HCT116 (cell line): ENCODE measurements at regions of chr20 and their contacts with region 1.

Region 1: DNA sequence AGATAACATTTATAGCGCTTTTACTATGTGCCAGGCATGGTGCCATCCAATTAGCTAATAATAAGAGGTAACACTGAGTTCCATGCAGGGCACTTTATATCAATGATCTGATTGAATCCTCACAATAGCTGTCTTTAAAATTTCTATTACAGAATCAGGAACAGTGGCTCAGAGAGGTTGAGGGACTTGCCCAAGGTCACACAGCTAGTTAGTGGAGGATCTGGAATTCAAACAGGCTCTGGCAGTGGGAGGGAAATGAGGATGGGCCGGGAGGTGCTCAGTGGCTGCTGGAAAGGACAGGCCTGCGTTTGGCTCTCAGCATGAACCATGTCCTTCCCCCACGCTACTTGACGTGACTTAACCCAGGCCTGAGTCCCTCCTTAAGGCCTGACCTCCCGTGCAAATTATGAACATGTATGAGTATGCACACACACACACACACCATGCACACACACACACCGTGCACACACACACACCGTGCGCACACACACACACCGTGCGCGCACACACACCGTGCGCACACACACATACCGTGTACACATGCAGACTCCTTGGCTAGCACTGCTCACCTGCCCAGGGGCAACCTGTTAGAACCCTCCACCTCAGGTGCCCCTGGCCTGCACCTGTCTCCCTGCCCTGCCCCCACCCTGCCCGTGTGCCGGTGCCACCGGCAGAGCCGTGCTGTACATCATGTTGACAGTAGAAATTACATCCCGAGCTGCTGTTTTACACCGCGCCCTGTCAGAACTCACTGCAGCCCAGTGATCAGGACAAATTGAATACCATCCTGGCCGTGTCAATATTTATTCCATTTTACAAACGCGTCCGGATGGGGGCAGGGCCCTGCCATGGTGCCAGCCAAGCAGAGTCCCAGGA is 43.7 kb downstream of the CDH22 start:
- DNase-seq: no peak
- ATAC-seq: no peak
- H3K4me3 ChIP-seq: no peak overlapping the region
- H3K27ac ChIP-seq: no peak overlapping the region
- H3K4me1 ChIP-seq: no peaks in the 10 kb centered on the region
- H3K27me3 ChIP-seq: no peaks in the 10 kb centered on the region
- CTCF ChIP-seq: no peak
- POLR2A ChIP-seq: no peak
- RAD21 ChIP-seq: no peak

Region 2: DNA sequence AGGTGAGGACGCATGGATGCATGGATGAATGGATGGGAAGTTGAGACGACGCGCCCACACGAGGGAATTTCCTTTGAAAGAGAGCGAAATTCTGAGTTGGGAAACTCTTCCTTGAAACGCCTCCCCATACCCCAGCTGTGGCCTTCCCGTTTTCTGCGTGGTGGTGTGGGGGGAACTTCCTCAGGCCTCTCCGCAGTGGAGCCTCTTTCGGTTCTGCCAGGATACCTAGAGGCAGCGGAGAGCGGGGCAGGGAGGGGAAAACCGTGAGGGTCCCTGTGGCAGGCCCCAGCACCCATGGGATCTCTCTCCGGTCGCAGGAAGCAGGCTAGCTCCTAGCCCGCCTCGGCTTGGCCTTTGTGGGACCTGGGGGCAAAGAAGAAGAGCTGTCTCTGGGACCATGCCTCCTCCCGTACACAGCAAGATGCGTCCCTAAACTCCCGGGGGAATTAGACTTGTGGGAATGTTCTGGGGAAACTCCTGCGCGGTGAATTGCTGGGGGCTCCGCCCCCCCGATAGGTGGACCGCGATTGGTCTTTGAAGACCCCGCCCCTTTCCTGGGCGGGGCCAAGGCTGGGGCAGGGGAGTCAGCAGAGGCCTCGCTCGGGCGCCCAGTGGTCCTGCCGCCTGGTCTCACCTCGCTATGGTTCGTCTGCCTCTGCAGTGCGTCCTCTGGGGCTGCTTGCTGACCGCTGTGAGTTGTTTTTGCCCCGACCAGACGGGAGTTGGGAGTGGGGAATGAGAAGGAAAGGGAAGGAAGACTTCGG is 146.7 kb before region 1 on chr20 and contains the start of gene CD40:
- CTCF ChIA-PET with region 1: no interaction called
- POLR2A ChIA-PET with region 1: no interaction called
- RAD21 ChIA-PET with region 1: no interaction called
- intact Hi-C with region 1: no loop called
- DNase-seq: peak; percentile 68
- ATAC-seq: peak; percentile 98
- H3K4me3 ChIP-seq: peak within 1 kb of the TSS; percentile 71 to 74
- H3K27ac ChIP-seq: peak within 1 kb of the TSS; percentile 33
- H3K4me1 ChIP-seq: peaks cover 11 to 15% of the 10 kb centered on the region in 2 experiments
- H3K27me3 ChIP-seq: no peaks in the 10 kb centered on the region
- CTCF ChIP-seq: no peak
- POLR2A ChIP-seq: peak; percentile 38
- RAD21 ChIP-seq: no peak
- total RNA-seq, gene CD40: 21.3 TPM

Region 3: DNA sequence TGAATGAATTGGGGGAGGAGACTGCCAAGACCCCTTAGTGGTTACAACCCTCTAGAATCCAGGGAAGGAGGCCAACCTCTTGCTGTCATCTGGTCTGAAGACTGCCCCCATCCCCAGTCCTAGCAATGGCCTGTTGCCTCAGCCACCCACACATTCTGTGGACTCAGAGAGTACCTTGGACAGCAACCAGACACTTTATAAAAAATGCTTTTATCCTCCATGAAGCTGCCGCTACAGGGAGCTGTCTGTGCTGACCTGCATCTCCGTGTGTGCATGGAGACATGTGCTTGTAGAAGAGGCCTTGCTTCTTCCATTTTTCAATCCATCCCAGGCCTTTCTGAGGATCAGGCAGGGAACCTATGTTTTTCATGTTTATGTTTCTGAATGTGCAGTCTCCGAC is 28.5 kb after region 1 on chr20:
- CTCF ChIA-PET with region 1: no interaction called
- POLR2A ChIA-PET with region 1: no interaction called
- RAD21 ChIA-PET with region 1: no interaction called
- intact Hi-C with region 1: no loop called
- DNase-seq: no peak
- ATAC-seq: peak; percentile 30; the same call in 1 of the 2 replicates
- H3K4me3 ChIP-seq: no peak overlapping the region
- H3K27ac ChIP-seq: no peak overlapping the region
- H3K4me1 ChIP-seq: 0 out of 4 replicates have a peak, but pooled peaks cover 3 to 4% of the 10 kb centered on the region in 2 experiments
- H3K27me3 ChIP-seq: peaks cover 31% of the 10 kb centered on the region
- CTCF ChIP-seq: no peak
- POLR2A ChIP-seq: no peak
- RAD21 ChIP-seq: no peak

Region 4: GRCh38 chr20:46343348-46343974 is 78.8 kb after region 1 on chr20:
- CTCF ChIA-PET with region 1: no interaction called
- POLR2A ChIA-PET with region 1: no interaction called
- RAD21 ChIA-PET with region 1: no interaction called
- intact Hi-C with region 1: loop called (anchors 2 kb)
- DNase-seq: no peak
- ATAC-seq: no peak
- H3K4me3 ChIP-seq: no peak overlapping the region
- H3K27ac ChIP-seq: no peak overlapping the region
- H3K4me1 ChIP-seq: no peaks in the 10 kb centered on the region
- H3K27me3 ChIP-seq: peaks cover 27% of the 10 kb centered on the region; the same call in 1 of the 2 replicates
- CTCF ChIP-seq: no peak
- POLR2A ChIP-seq: no peak
- RAD21 ChIP-seq: no peak

Region 5: DNA sequence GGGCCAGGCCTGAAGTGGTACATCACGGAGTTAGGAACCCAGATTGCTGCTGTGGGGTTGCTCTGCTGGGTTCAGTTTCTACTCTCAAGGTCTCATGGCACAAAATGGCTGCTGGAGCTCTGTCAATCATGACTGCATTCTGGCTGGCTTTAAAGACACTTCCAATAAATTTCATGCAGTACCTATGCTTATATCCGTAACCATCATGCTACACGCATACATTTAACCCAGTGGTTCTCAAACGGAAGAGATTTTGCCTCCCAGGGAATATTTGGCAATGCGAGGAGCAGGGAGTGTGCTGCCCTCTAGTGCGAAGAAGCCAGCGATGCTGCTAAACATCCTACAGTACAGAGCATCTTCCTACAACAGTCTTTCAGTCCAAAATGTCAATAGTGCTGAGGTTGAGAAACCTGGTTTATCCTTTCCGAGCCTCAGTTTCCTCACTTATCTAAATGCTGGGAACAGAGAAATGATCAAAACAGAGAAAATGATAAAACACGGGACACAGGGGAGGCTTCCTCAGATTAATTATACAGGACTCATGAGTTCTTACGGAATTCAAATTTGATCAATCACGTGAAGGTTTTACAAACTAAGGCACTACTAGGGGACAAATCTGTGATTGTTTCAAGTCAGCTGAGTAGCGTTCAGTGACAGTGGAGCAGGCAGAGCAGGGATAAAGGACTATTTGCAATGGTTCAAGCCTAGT is 435.2 kb after region 1 on chr20:
- CTCF ChIA-PET with region 1: no interaction called
- POLR2A ChIA-PET with region 1: no interaction called
- RAD21 ChIA-PET with region 1: no interaction called
- intact Hi-C with region 1: no loop called
- DNase-seq: no peak
- ATAC-seq: peak; percentile 92
- H3K4me3 ChIP-seq: no peak overlapping the region
- H3K27ac ChIP-seq: no peak overlapping the region
- H3K4me1 ChIP-seq: peaks cover 5 to 16% of the 10 kb centered on the region in 2 experiments; a peak in 3 of 4 replicates
- H3K27me3 ChIP-seq: no peaks in the 10 kb centered on the region
- CTCF ChIP-seq: peak; percentile 65 to 92 (median 91); a peak in 5 of 6 replicates
- POLR2A ChIP-seq: no peak
- RAD21 ChIP-seq: peak; percentile 71